Activated T-helper 2 cell treated with anti-CD3 and anti-CD28 coated beads, Interferon-gamma antibody, Interleukin-2, Interleukin-4, amounts not matched to agents 10 μg/mL and 5 μg/mL and 100 μg/mL, durations not matched to agents 14 hours and 24 hours and 36 hours (primary cell): ENCODE measurements at regions of chr14 and their contacts with region 1.

Region 1: GRCh38 chr14:71290960-71291466 is 383.8 kb downstream of the PCNX1 start:
- DNase-seq: no peak
- H3K4me3 Mint-ChIP-seq: no peak overlapping the region
- H3K27ac Mint-ChIP-seq: peak overlapping the region; percentile 73
- H3K4me1 Mint-ChIP-seq: peaks cover 17% of the 10 kb centered on the region
- H3K27me3 Mint-ChIP-seq: peaks cover 4% of the 10 kb centered on the region

Region 2: DNA sequence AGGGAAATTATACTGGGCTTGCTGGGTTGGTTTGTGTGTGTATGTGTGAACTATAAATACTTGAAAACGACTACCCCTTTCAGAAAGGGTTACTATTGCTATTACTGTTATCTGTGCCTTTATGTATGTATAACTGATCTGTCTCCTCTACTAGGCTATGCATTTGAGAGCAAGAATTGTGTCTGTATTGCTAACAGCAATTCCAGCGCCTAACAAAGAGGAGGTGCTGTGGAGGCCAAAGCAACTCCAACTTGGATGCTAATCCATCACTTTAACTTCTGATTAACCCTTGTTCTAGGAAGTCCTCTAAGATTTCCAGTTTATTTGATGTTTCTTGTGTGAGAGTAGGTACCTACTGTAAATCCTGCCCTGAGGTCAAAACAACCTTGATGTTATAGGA is 69.9 kb before region 1 on chr14:
- intact Hi-C with region 1: loop called (anchors 2 kb)
- DNase-seq: no peak
- H3K4me3 Mint-ChIP-seq: no peak overlapping the region
- H3K27ac Mint-ChIP-seq: no peak overlapping the region
- H3K4me1 Mint-ChIP-seq: peaks cover 24% of the 10 kb centered on the region
- H3K27me3 Mint-ChIP-seq: no peaks in the 10 kb centered on the region